Ovary (tissue), 10 donors: ENCODE measurements at regions of chr11 and their contacts with region 1.

Region 1: DNA sequence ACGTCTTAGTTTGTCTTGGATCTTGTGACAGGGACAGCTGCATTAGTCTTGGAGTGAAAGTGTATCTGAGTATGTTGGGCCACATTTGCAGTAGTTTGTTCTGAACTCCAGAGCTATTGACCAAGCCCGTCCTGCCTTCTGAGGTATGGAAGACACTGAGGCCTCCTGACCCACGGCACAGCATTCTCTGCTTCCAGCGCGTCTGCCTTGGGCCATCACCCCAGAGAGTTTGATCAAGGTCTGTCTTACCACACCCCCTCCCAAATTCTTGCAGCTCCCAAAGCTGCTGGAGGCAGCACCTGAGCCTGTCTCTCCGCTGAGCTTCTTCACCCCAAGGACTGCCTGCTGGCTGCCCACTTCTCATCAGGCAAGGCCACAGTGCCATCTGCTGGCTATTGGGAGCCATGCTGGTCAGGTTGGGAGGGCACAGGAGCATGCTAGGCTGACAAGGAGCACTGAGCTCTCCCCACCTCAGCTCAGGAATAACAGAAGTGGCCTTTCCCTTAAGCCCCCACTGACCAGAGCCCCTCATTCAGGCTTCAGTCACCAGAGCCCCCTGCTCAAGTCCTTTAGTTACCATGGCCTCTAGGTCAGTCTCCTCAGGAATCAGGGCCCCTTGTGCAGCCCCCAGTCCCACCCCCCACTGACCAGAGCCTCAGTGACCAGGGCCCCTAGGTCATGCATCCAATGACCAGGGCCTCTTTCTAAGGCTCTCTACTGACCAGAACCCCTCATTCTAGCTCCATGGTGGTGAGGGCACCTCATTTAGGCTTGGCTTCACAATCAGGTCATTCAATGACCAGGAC is 27.2 kb upstream of the SMPD1 start:
- DNase-seq: peak; percentile 63 to 81 (median 76)
- H3K4me3 ChIP-seq: no peak overlapping the region
- H3K27ac ChIP-seq: no peak overlapping the region
- H3K4me1 ChIP-seq: no peaks in the 10 kb centered on the region
- H3K27me3 ChIP-seq: no peaks in the 10 kb centered on the region
- CTCF ChIP-seq: peak; percentile 43 to 72 (median 65)
- EP300 ChIP-seq: no peak
- POLR2A ChIP-seq: no peak

Region 2: GRCh38 chr11:6022956-6023355 is 340.1 kb before region 1 on chr11:
- intact Hi-C with region 1: loop called in 2 of 4 experiments (anchors 5 to 10 kb)
- DNase-seq: no peak
- H3K4me3 ChIP-seq: no peak overlapping the region
- H3K27ac ChIP-seq: no peak overlapping the region
- H3K4me1 ChIP-seq: no peaks in the 10 kb centered on the region
- H3K27me3 ChIP-seq: no peaks in the 10 kb centered on the region
- CTCF ChIP-seq: no peak
- EP300 ChIP-seq: no peak
- POLR2A ChIP-seq: no peak